ENCODE measurements at regions of chr19 and their contacts with region 1.

Region 1: GRCh38 chr19:46346821-46347571 is at the start of gene PPP5C:
- DNase-seq: peak; percentile 90 to 95 (median 92)
- H3K4me3 ChIP-seq: peak within 1 kb of the TSS; percentile 94
- H3K27ac ChIP-seq: peak within 1 kb of the TSS; percentile 38 to 60
- H3K4me1 ChIP-seq: peaks cover 19% of the 10 kb centered on the region
- H3K27me3 ChIP-seq: no peaks in the 10 kb centered on the region
- CTCF ChIP-seq: peak in 2 of 3 donors; percentile 35 to 62
- EP300 ChIP-seq: no peak
- POLR2A ChIP-seq: peak; percentile 87
- total RNA-seq, gene PPP5C: 34.5 to 63.4 (median 45.3) TPM

Region 2: DNA sequence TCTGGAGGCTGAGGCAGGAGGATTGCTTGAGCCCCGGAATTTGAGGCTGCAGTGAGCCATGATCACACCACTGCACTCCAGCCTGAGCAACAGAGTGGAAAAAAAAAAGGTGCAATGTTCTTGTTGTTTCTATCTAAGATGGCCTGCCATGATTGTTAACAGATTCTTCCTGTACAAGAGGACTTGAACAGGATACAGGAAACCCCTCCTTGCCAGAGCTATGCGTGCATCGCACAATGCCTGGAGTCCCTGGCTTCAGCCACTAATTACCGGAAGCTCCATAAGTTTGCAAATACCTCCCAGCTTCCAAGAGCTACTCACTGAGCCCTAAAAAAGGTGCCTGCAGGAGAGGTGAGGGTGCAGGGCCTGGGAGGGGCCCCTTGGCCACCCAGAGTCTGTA is 63.2 kb before region 1 on chr19:
- intact Hi-C with region 1: loop called in 2 of 4 experiments (anchors 5 to 10 kb)
- DNase-seq: no peak
- H3K4me3 ChIP-seq: no peak overlapping the region
- H3K27ac ChIP-seq: no peak overlapping the region
- H3K4me1 ChIP-seq: no peaks in the 10 kb centered on the region
- H3K27me3 ChIP-seq: no peaks in the 10 kb centered on the region
- CTCF ChIP-seq: no peak
- EP300 ChIP-seq: no peak
- POLR2A ChIP-seq: no peak

Region 3: GRCh38 chr19:46288896-46289588 is 58.0 kb before region 1 on chr19:
- intact Hi-C with region 1: loop called in 3 of 4 experiments (anchors 5 to 10 kb)
- DNase-seq: peak in 2 of 5 donors; percentile 29 to 33
- H3K4me3 ChIP-seq: no peak overlapping the region
- H3K27ac ChIP-seq: no peak overlapping the region
- H3K4me1 ChIP-seq: peaks cover 4% of the 10 kb centered on the region
- H3K27me3 ChIP-seq: no peaks in the 10 kb centered on the region
- CTCF ChIP-seq: no peak
- EP300 ChIP-seq: no peak
- POLR2A ChIP-seq: no peak

Region 4: DNA sequence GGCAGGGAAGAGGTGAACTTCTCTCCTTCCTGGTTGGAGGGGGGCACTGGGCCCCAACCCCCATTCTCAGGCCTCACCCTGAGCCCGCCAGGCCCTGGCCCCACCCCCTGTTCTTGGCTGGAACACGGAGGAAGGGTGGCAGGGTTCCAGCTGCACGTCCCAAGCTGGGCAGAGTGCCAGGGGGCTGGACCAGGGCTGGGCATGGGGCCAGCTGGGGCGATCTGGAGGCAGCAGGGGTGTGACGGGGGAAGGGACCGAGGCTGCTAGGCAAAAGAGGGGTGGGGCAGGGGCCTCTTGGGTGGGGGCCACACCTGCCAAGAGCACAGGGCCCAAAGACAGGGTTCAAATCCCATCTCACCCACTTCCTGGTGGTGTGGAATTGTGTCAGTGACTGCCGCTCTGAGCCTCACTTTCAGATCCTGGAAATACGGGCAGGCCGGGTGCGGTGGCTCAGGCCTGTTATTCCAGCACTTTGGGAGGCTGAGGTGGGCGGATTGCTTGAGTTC is 47.9 kb before region 1 on chr19:
- intact Hi-C with region 1: loop called in 1 of 4 experiments (anchors 10 kb)
- DNase-seq: peak; percentile 98 to 100 (median 99)
- H3K4me3 ChIP-seq: peak overlapping the region; percentile 44
- H3K27ac ChIP-seq: peak overlapping the region; percentile 66 to 82
- H3K4me1 ChIP-seq: peaks cover 16% of the 10 kb centered on the region
- H3K27me3 ChIP-seq: no peaks in the 10 kb centered on the region
- CTCF ChIP-seq: no peak
- EP300 ChIP-seq: peak; percentile 61
- POLR2A ChIP-seq: peak; percentile 23

Region 5: GRCh38 chr19:46308510-46308909 is 38.5 kb before region 1 on chr19:
- intact Hi-C with region 1: loop called in 1 of 4 experiments (anchors 5 kb)
- DNase-seq: no peak
- H3K4me3 ChIP-seq: no peak overlapping the region
- H3K27ac ChIP-seq: no peak overlapping the region
- H3K4me1 ChIP-seq: no peaks in the 10 kb centered on the region
- H3K27me3 ChIP-seq: no peaks in the 10 kb centered on the region
- CTCF ChIP-seq: no peak
- EP300 ChIP-seq: no peak
- POLR2A ChIP-seq: no peak

Region 6: GRCh38 chr19:46551164-46551563 is 204.2 kb after region 1 on chr19:
- intact Hi-C with region 1: no loop called
- DNase-seq: no peak
- H3K4me3 ChIP-seq: no peak overlapping the region
- H3K27ac ChIP-seq: no peak overlapping the region
- H3K4me1 ChIP-seq: no peaks in the 10 kb centered on the region
- H3K27me3 ChIP-seq: no peaks in the 10 kb centered on the region
- CTCF ChIP-seq: no peak
- EP300 ChIP-seq: no peak
- POLR2A ChIP-seq: no peak

Measured in ovary (tissue), 10 donors.